Colonic mucosa (tissue), 4 donors: ENCODE measurements at regions of chr2 and their contacts with region 1.

Region 1: GRCh38 chr2:105444219-105444598 is 45.4 kb upstream of the FHL2 start:
- DNase-seq: no peak
- H3K4me3 ChIP-seq: no peak overlapping the region
- H3K27ac ChIP-seq: peak overlapping the region; percentile 15
- H3K4me1 ChIP-seq: peaks cover 5% of the 10 kb centered on the region
- H3K27me3 ChIP-seq: no peaks in the 10 kb centered on the region
- CTCF ChIP-seq: no peak

Region 2: GRCh38 chr2:105373895-105374401 is 70.3 kb before region 1 on chr2:
- intact Hi-C with region 1: no loop called
- DNase-seq: no peak
- H3K4me3 ChIP-seq: no peak overlapping the region
- H3K27ac ChIP-seq: peak overlapping the region; percentile 15
- H3K4me1 ChIP-seq: no peaks in the 10 kb centered on the region
- H3K27me3 ChIP-seq: no peaks in the 10 kb centered on the region
- CTCF ChIP-seq: no peak

Region 3: DNA sequence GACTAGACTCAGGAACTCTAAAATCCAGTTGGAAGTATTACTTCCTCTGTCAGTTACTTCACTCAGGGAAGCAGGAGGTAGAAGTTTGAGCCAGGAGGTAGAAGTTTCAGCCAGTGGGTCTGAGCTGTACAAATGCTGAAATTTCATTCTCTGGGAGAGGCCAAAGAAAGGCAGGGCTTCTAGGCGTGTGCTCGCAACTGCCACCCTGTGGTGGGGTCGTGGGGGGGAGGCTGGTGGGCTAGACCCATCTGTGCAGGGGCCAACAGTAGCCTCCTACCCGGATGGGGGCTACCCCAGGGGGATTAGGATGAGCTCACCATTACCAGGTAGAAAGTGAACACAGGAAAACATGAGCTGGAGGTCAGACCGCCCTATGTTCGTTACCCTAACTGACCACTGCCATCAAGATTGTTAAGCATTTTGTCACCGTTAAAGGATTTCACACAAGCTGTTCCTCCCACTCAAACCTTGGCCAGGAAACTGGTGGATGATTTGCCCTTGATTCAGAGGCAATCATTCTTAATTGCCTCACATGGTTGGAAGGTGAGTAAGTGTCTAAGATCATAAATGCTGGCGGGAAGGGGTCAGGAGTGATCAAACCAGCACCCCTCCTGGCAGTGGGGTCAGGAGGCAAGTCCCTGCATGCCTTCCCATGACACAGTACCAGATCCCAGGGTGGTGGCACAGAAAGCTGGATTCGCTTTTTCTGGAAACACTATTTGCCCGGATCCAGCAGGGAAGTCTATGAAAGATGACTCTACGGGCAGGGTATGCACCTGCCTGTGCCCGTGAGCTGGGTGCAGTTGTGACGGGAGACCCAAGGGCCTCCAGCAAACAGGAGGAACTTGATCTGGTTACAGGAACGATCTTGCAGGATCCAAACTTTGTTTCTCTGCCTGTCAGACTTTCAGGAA is 40.2 kb before region 1 on chr2:
- intact Hi-C with region 1: loop called (anchors 5 kb)
- DNase-seq: peak; percentile 71
- H3K4me3 ChIP-seq: no peak overlapping the region
- H3K27ac ChIP-seq: peak overlapping the region; percentile 89
- H3K4me1 ChIP-seq: peaks cover 3% of the 10 kb centered on the region
- H3K27me3 ChIP-seq: no peaks in the 10 kb centered on the region
- CTCF ChIP-seq: no peak